ENCODE measurements at regions of chr3 and their contacts with region 1.

Region 1: GRCh38 chr3:138935848-138936740 is 10.8 kb downstream of the FOXL2 start:
- DNase-seq: no peak
- H3K4me3 ChIP-seq: peak overlapping the region; percentile 55
- H3K27ac ChIP-seq: no peak overlapping the region
- H3K27me3 ChIP-seq: peaks cover 76% of the 10 kb centered on the region
- CTCF ChIP-seq: peak; percentile 77

Region 2: DNA sequence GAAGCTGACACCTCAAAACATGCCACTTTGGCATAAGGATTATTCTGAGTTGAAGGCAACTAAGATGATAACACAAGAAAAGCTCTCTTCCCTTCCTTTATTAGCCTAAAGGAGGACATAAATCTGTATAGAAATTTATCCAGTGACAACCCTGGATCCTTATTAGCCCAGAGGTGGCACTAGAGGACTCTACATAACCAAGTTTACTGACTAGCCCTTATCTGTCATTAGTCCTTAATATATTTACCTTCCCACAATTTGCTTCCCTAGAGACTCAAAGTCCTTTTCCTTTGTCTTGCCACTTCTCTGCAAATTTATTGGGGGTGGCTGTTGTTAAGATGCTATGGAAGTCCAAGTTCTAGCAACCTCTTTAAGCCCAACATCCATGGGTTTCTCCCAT is 368.7 kb before region 1 on chr3:
- CTCF ChIA-PET with region 1: no interaction called
- POLR2A ChIA-PET with region 1: no interaction called
- DNase-seq: no peak
- H3K4me3 ChIP-seq: no peak overlapping the region
- H3K27ac ChIP-seq: no peak overlapping the region
- H3K27me3 ChIP-seq: no peaks in the 10 kb centered on the region
- CTCF ChIP-seq: no peak

Region 3: GRCh38 chr3:138594150-138594934 is 341.8 kb before region 1 on chr3 and contains the start of gene CEP70:
- CTCF ChIA-PET with region 1: interaction called, 17 read pairs
- POLR2A ChIA-PET with region 1: interaction called, 5 read pairs
- DNase-seq: peak; percentile 85
- H3K4me3 ChIP-seq: peak within 1 kb of the TSS; percentile 98
- H3K27ac ChIP-seq: peak within 1 kb of the TSS; percentile 75
- H3K27me3 ChIP-seq: no peaks in the 10 kb centered on the region
- CTCF ChIP-seq: peak; percentile 80
- polyA plus RNA-seq, gene CEP70: 9.8 and 14.6 TPM in 2 replicates

Region 4: DNA sequence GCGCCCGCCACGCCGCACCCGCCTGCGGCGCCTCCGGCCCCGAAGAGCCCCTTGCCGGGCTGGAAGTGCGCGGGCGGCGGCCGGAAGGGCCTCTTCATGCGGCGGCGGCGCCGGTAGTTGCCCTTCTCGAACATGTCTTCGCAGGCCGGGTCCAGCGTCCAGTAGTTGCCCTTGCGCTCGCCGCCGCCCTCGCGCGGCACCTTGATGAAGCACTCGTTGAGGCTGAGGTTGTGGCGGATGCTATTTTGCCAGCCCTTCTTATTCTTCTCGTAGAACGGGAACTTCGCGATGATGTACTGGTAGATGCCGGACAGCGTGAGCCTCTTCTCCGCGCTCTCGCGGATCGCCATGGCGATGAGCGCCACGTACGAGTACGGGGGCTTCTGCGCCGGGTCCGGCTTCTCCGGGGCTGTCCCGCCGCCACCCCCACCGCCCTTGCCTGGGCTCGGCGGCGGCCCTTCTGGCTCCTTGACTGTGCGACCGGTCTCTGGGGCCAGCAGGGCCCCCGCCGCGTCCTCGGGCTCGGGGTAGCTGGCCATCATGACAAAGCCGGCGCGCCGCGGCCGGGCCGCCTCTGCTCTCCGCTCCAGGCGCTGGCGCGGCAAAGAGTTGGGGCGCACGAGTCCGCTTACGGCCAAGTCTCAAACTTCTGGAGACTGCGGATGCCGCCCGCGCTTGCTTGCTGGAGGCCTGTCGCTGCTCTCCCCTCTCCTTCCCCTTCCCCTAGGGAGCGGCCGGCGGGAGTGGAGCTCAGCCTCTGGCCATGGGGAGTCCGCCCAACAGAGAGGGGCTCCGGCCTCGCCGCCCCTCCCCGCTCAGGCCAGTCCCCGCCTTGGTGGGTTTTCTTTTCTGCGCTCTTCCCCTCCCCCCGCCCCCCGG is 10.3 kb after region 1 on chr3:
- CTCF ChIA-PET with region 1: interaction called, 25 read pairs
- POLR2A ChIA-PET with region 1: no interaction called
- DNase-seq: no peak
- H3K4me3 ChIP-seq: peak overlapping the region; percentile 47
- H3K27ac ChIP-seq: no peak overlapping the region
- H3K27me3 ChIP-seq: peaks cover 94% of the 10 kb centered on the region
- CTCF ChIP-seq: 0 out of 2 replicates have a peak, but pooled peaks have one; percentile 15

Region 5: DNA sequence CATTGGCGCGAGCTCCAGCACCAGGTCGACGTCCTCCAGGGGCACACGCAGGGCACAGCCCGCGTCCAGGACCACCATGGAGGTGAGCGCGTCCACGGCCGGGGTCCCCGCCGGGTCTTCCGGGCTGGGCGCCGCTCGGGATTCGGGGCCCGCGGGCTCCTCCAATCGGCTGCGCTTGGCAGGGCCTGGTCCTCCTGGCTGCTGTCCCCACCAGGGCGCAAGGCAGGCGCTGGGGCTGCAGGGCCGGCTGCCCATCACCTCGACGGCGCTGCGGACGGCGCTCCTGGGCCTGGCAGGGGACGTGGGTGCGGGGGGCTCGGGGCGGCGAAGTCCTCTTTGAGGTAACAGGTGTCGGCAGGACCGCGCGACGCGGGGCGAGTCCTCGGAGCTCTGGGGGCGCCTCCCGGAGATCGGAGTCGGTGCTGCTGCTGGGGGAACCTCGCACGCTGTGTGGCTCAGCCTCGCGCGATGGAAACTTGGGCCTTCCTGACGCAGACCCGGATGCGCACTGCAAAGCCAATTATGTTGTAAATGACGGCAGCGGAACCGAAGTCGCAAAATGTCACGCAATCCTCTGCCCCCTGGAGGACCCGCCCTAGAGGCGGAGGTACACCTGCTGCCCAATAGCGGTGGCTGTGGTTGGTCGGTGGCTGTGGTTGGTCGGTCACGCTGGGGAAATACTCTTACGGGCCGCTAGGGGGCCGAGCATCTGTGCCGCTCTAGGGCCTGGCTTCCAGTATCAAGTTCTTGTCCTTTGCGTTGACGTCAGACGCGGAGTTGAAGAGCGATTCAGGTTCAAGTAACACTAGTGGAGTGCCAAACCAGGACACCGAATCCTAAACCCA is 108.5 kb after region 1 on chr3 and contains the start of gene PRR23C:
- CTCF ChIA-PET with region 1: no interaction called
- POLR2A ChIA-PET with region 1: no interaction called
- DNase-seq: no peak
- H3K4me3 ChIP-seq: no peak within 1 kb of the TSS
- H3K27ac ChIP-seq: no peak within 1 kb of the TSS
- H3K27me3 ChIP-seq: no peaks in the 10 kb centered on the region
- CTCF ChIP-seq: no peak
- polyA plus RNA-seq, gene PRR23C: not detected in 2 replicates

Region 6: DNA sequence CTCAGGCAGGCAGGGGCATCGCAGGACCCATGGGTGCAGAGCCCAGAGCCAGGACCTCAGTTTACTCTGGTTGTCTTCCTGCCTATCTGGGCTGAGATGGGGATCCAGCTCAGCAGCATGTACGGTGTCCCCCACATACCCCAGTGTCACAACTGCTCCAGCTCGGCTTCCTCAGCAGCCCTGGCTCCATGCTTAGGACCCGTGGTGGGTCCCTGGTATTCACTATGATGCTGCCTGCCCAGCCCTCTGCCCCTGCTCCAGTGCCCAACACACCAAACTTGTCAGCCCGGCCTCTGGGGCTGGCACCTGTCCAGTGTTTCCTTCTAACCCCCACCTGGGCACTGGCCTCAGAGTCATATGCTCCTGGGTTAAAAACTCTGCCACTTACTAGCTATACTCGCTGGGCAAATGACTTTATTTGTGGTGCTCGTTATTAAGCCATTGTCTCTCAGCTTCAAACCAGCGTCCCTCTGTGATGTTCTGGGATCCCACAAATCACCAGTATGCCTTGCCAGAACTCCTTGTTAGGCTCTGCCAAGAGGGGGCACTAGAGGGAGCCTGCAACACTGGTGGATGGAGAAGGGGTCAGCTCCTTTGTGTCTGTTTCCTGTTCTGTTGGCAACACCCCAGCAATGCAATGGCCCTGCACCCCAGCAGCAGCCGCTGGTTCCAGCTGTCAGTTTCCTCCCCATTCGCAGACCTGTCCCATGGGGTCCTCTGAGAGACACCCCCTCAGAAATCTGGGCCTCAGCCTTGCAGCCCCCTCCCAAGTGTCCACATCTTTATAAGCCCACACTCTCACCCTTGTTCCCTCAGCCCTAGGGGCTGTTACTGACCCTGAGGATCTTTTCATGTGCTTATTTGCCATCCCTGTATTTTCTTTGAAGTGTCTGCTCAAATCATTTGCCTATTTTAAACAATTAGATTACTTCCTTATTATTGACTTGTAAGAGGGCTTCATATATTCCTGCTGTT is 383.6 kb after region 1 on chr3:
- CTCF ChIA-PET with region 1: interaction called, 11 read pairs
- POLR2A ChIA-PET with region 1: no interaction called
- DNase-seq: no peak
- H3K4me3 ChIP-seq: no peak overlapping the region
- H3K27ac ChIP-seq: no peak overlapping the region
- H3K27me3 ChIP-seq: peaks cover 5% of the 10 kb centered on the region
- CTCF ChIP-seq: peak; percentile 43

Region 7: GRCh38 chr3:139353920-139354556 is 417.9 kb after region 1 on chr3:
- CTCF ChIA-PET with region 1: interaction called, 14 read pairs
- POLR2A ChIA-PET with region 1: no interaction called
- DNase-seq: peak; percentile 29
- H3K4me3 ChIP-seq: no peak overlapping the region
- H3K27ac ChIP-seq: no peak overlapping the region
- H3K27me3 ChIP-seq: no peaks in the 10 kb centered on the region
- CTCF ChIP-seq: peak; percentile 94